ENCODE measurements at regions of chr4 and their contacts with region 1.

Region 1: DNA sequence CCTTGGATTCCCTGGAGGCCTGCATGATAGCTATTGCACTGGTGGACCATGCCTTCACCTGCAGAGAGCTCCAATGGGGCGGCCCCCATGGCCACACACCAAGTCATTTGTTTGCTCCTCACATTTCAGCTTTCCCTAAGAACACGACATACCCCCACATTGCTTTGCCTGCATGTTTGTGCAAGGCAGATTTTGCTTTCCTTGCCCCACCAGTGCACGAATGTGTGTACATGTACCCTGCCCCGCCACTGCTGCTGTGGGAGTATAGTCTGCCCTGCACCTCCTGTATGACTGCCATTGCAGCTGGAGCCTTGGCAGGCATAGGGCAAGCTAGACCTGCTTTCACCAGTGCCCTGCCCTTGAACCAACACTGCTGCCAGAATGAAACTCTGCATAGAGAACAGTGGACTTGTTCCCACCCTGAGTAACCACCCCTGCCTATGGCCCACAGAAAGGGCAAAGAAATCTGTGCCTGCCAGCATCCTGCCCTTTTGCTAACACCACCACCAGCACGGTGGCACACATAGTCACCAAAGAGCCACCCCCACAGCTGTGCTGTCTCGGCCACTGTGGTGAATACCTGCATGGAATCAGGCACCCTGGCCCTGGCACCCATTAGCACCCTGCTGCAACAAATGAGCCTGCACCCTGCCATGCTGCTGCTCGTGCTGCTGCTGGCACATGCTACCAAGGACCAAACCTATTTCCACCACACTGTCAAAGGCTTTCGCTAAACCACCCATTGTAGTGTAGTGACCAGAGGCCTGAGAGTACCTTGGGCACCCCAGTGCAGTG is 661.7 kb upstream of the FAM241A start:
- DNase-seq: no peak
- ATAC-seq: no peak
- H3K4me3 ChIP-seq: no peak overlapping the region
- H3K4me3 Mint-ChIP-seq: no peak overlapping the region
- H3K27ac ChIP-seq: no peak overlapping the region
- H3K27ac Mint-ChIP-seq: no peak overlapping the region
- H3K4me1 ChIP-seq: no peaks in the 10 kb centered on the region
- H3K4me1 Mint-ChIP-seq: no peaks in the 10 kb centered on the region
- H3K27me3 ChIP-seq: no peaks in the 10 kb centered on the region
- H3K27me3 Mint-ChIP-seq: no peaks in the 10 kb centered on the region

Region 2: DNA sequence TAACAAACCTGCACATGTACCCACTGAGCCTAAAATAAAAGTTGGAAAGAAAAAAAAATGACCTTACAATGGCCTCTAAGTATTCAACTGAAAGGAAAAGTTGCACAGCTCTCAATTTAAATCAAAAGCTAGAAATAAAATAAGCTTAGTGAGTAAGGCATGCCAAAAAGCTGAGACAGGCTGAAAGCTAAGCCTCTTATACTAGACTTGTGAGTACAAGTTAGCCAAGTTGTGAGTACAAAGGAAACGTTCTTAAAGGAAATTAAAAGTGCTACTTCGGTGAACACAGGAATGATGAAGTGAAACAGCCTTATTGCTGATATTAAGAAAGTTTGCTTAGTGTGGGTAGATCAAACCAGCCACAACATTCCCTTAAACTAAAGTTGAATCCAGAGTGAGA is 152.8 kb before region 1 on chr4:
- CTCF ChIA-PET with region 1: no interaction called
- POLR2A ChIA-PET with region 1: no interaction called
- DNase-seq: no peak
- ATAC-seq: no peak
- H3K4me3 ChIP-seq: no peak overlapping the region
- H3K4me3 Mint-ChIP-seq: no peak overlapping the region
- H3K27ac ChIP-seq: no peak overlapping the region
- H3K27ac Mint-ChIP-seq: no peak overlapping the region
- H3K4me1 ChIP-seq: no peaks in the 10 kb centered on the region
- H3K4me1 Mint-ChIP-seq: no peaks in the 10 kb centered on the region
- H3K27me3 ChIP-seq: no peaks in the 10 kb centered on the region
- H3K27me3 Mint-ChIP-seq: no peaks in the 10 kb centered on the region

Region 3: GRCh38 chr4:111441687-111442086 is 41.9 kb before region 1 on chr4:
- CTCF ChIA-PET with region 1: interaction called, 7 to 10 read pairs
- POLR2A ChIA-PET with region 1: no interaction called
- DNase-seq: no peak
- ATAC-seq: no peak
- H3K4me3 ChIP-seq: no peak overlapping the region
- H3K4me3 Mint-ChIP-seq: no peak overlapping the region
- H3K27ac ChIP-seq: no peak overlapping the region
- H3K27ac Mint-ChIP-seq: no peak overlapping the region
- H3K4me1 ChIP-seq: no peaks in the 10 kb centered on the region
- H3K4me1 Mint-ChIP-seq: no peaks in the 10 kb centered on the region
- H3K27me3 ChIP-seq: no peaks in the 10 kb centered on the region
- H3K27me3 Mint-ChIP-seq: no peaks in the 10 kb centered on the region

Region 4: DNA sequence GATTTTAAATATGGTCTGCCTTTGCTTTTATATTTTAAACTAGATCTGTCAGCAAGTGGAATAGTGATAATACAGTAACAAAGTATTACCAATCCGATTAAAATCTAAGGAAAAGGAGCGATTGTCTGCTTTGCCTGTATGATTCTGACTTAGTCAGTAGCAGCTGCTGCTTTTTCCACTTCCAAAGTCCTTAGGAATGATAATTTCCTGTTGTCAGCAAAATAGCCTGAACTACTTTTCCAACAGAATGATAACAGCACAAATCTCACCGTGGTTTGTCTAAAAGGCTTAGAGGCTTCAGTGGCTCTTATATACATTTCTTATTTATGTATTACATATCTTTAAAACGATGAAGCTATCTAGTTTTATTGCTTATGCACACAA is 1855.8 kb after region 1 on chr4:
- CTCF ChIA-PET with region 1: no interaction called
- POLR2A ChIA-PET with region 1: no interaction called
- DNase-seq: no peak
- ATAC-seq: no peak
- H3K4me3 ChIP-seq: no peak overlapping the region
- H3K4me3 Mint-ChIP-seq: no peak overlapping the region
- H3K27ac ChIP-seq: no peak overlapping the region
- H3K27ac Mint-ChIP-seq: no peak overlapping the region
- H3K4me1 ChIP-seq: no peaks in the 10 kb centered on the region
- H3K4me1 Mint-ChIP-seq: no peaks in the 10 kb centered on the region
- H3K27me3 ChIP-seq: no peaks in the 10 kb centered on the region
- H3K27me3 Mint-ChIP-seq: peaks cover 3 to 16% of the 10 kb centered on the region in 2 donors

Measured in T-cell (primary cell).